Right ventricle myocardium inferior (tissue), 1 donor: ENCODE measurements at regions of chr15 and their contacts with region 1.

Region 1: GRCh38 chr15:50765195-50765973 is at the start of gene SPPL2A:
- DNase-seq: peak; percentile 93
- ATAC-seq: peak; percentile 90
- total RNA-seq, gene SPPL2A: 94.5 TPM

Region 2: GRCh38 chr15:50424066-50424890 is 341.1 kb before region 1 on chr15 and contains the start of gene USP8:
- intact Hi-C with region 1: loop called (anchors 10 kb)
- DNase-seq: peak; percentile 98
- ATAC-seq: peak; percentile 99
- total RNA-seq, gene USP8: 44.7 TPM

Region 3: GRCh38 chr15:50686468-50687301 is 78.7 kb before region 1 on chr15 and contains the start of gene TRPM7:
- intact Hi-C with region 1: loop called (anchors 2 kb)
- DNase-seq: peak; percentile 95
- ATAC-seq: peak; percentile 96
- total RNA-seq, gene TRPM7: 28.5 TPM

Region 4: DNA sequence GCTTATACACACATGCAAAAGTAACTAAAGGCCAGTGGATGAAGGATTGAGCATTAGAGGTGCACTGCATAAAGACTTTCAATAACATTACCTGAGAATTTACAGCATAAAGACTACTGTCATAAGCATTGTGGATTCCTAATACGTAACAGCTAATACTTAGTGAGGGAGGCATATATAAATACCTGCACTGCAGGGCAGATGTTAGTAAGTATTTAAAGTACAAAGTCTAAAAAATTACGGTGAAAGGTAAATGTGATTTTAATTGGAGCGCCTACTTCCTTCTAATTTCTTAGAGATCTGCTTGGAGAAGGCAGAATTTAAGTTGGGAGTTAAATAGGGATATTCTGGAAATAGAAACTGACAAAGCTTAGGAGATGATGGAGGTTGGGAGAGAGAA is 53.4 kb before region 1 on chr15:
- intact Hi-C with region 1: loop called (anchors 5 kb)
- DNase-seq: no peak
- ATAC-seq: no peak

Region 5: GRCh38 chr15:50876989-50877360 is 111.6 kb after region 1 on chr15:
- intact Hi-C with region 1: loop called (anchors 5 kb)
- DNase-seq: no peak
- ATAC-seq: peak; percentile 75